Posterior cingulate gyrus (tissue), 11 donors: ENCODE measurements at regions of chr7 and their contacts with region 1.

Region 1: GRCh38 chr7:27160546-27161213 is 4.2 kb upstream of the HOXA7 start:
- DNase-seq: peak; percentile 66 to 97 (median 80)

Region 2: DNA sequence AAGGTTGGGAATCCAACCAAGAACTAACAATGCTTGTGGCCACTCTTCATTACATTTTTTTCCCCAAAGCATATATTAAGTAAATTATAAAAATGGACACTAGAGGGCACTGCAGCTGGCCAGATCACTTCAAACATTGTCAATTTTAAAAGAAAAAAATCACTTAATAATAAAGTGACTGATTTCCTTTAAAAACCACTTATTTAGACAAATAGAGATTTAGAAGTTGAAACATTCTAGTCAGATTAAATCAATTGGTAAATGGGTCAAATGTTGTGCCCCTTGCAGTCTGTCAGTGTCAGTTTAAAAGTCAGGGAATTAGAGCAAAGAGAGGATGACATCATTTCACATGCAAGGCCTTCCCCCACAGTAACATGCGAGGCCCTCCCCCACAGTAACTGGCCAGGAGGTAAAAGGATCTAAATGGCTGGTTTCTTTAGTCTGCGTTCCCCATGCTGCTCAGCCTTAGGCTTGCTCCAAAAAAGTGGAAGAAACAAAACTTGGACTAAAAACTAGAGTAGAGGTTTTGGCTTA is 474.2 kb before region 1 on chr7:
- intact Hi-C with region 1: loop called (anchors 2 kb)
- DNase-seq: peak in 1 of 10 donors; percentile 34

Region 3: DNA sequence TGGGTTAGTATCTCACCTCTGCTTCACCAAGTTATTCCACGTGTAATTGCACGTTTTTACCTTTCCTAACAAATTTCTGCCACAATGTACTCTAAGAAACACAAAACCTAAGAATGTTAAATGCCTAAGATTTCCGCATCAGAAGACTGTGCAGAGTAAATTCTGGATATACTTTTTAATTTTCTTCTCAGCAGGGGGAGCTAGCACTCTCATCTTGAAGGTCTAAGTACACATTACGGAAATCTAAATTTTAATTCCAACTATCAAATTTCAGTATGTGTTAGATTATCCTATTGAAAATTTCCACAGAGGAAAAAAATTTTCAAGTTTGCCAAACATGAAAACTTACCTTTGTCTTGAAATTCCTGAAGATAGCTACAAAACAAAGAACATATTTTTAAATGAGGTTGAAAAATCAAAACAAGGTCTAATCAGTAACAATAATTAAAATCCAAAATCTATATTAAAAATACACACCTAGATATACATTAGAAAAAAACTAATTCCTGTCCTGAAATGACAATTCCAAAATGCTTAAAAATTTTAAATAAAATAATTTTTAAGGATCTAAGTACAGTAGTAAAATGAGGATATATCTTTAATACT is 306.8 kb before region 1 on chr7:
- intact Hi-C with region 1: loop called (anchors 1 kb)
- DNase-seq: no peak